Panc1 (cell line): ENCODE measurements at regions of chr1 and their contacts with region 1.

Region 1: GRCh38 chr1:42613803-42614131 is 44.5 kb upstream of the PPIH start:
- DNase-seq: no peak
- ATAC-seq: no peak
- H3K4me3 ChIP-seq: no peak overlapping the region
- H3K27ac ChIP-seq: no peak overlapping the region
- H3K4me1 ChIP-seq: no peaks in the 10 kb centered on the region
- H3K27me3 ChIP-seq: peaks cover 4% of the 10 kb centered on the region
- CTCF ChIP-seq: no peak

Region 2: GRCh38 chr1:42290130-42290529 is 323.6 kb before region 1 on chr1:
- CTCF ChIA-PET with region 1: no interaction called
- POLR2A ChIA-PET with region 1: no interaction called
- in situ Hi-C with region 1: no loop called
- intact Hi-C with region 1: no loop called
- DNase-seq: no peak
- ATAC-seq: no peak
- H3K4me3 ChIP-seq: no peak overlapping the region
- H3K27ac ChIP-seq: no peak overlapping the region
- H3K4me1 ChIP-seq: no peaks in the 10 kb centered on the region
- H3K27me3 ChIP-seq: no peaks in the 10 kb centered on the region
- CTCF ChIP-seq: no peak

Region 3: DNA sequence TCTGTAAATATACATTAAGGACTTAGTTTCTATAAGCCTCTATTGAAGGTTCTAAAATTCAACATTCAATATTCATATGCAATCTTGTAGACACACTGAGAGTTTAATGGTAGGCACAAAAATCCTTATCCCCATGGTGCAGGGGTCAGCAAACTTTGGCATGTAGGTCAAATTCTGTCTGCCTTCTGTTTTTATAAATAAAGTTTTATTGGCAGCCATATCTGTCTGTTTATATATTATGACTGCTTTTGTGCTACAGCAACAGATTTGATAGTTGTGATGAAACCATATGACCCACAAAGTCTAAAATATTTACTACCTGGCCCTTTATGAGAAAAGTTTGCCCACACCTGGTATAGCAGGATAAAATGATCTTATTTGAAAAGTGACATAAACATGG is 46.7 kb before region 1 on chr1:
- CTCF ChIA-PET with region 1: no interaction called
- POLR2A ChIA-PET with region 1: interaction called, 10 read pairs
- in situ Hi-C with region 1: no loop called
- intact Hi-C with region 1: no loop called
- DNase-seq: no peak
- ATAC-seq: no peak
- H3K4me3 ChIP-seq: no peak overlapping the region
- H3K27ac ChIP-seq: no peak overlapping the region
- H3K4me1 ChIP-seq: no peaks in the 10 kb centered on the region
- H3K27me3 ChIP-seq: no peaks in the 10 kb centered on the region; the same call in 1 of the 2 replicates
- CTCF ChIP-seq: no peak

Region 4: GRCh38 chr1:42657971-42658879 is 44.5 kb after region 1 on chr1 and contains the start of gene PPIH:
- CTCF ChIA-PET with region 1: no interaction called
- POLR2A ChIA-PET with region 1: no interaction called
- in situ Hi-C with region 1: no loop called
- intact Hi-C with region 1: no loop called
- DNase-seq: peak; percentile 84
- ATAC-seq: peak; percentile 100
- H3K4me3 ChIP-seq: peak within 1 kb of the TSS; percentile 86 to 98
- H3K27ac ChIP-seq: peak within 1 kb of the TSS; percentile 96
- H3K4me1 ChIP-seq: peaks cover 15% of the 10 kb centered on the region
- H3K27me3 ChIP-seq: peaks cover 3% of the 10 kb centered on the region; the same call in 1 of the 2 replicates
- CTCF ChIP-seq: no peak
- total RNA-seq, gene PPIH: 78.5 TPM